ENCODE measurements at regions of chr10 and their contacts with region 1.

Region 1: DNA sequence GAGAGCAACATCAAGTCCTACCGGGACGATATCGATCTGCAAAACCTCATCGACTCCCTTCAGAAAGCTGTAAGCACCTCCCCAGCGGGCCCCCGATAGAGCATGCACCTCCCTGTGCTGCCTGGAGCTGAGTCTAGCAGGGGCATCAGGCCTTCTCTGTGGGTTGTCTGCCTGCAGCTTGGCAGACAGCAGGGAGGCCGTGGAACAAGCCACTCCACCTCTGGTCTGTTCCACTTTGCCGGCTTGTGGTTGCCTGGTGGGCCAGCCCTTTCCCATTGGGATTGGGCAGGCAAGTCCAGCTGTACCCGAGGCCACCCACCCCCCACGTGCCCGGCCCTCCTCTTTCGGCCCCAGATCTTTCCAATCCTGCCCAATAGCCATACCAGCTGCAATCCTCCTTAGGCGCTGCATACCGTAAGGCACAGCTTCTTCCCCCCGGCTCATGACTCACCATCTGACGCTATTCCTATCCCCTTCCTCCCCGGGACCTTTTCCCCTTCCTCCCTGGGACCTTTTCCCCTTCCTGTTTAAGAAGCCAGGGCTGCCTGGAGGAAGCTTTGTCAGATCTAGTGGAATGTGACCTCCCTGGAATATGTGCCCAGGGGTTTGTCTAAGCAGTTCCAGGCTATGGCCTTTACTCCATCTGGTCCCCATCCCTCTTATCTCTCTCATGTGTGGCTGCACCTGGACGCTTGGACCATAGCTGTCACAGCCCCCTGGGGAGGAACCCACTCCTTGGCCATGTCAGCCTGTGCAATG is 28.1 kb upstream of the SH2D4B start:
- DNase-seq: peak in 1 of 35 experiments; percentile 12
- ATAC-seq: no peak
- H3K4me3 ChIP-seq: no peak overlapping the region
- H3K4me3 Mint-ChIP-seq: no peak overlapping the region
- H3K27ac ChIP-seq: no peak overlapping the region
- H3K27ac Mint-ChIP-seq: peak overlapping the region; percentile 80 to 84
- H3K4me1 ChIP-seq: peaks cover 12 to 51% of the 10 kb centered on the region in 2 experiments
- H3K4me1 Mint-ChIP-seq: peaks cover 47 to 62% (median 49%) of the 10 kb centered on the region in 3 donors
- H3K27me3 ChIP-seq: no peaks in the 10 kb centered on the region
- H3K27me3 Mint-ChIP-seq: no peaks in the 10 kb centered on the region

Region 2: GRCh38 chr10:80408242-80409101 is 101.1 kb before region 1 on chr10 and contains the start of gene PRXL2A:
- CTCF ChIA-PET with region 1: interaction called, 10 to 12 read pairs
- POLR2A ChIA-PET with region 1: no interaction called
- DNase-seq: peak; percentile 35 to 86 (median 72)
- ATAC-seq: peak; percentile 96 to 98 (median 97)
- H3K4me3 ChIP-seq: peak within 1 kb of the TSS; percentile 76 to 92
- H3K4me3 Mint-ChIP-seq: peak within 1 kb of the TSS; percentile 89 to 91 (median 90)
- H3K27ac ChIP-seq: no peak within 1 kb of the TSS
- H3K27ac Mint-ChIP-seq: peak within 1 kb of the TSS; percentile 67 to 89
- H3K4me1 ChIP-seq: peaks cover 0 to 19% of the 10 kb centered on the region in 2 experiments
- H3K4me1 Mint-ChIP-seq: peaks cover 24 to 39% (median 35%) of the 10 kb centered on the region in 3 donors
- H3K27me3 ChIP-seq: peaks cover 0 to 26% of the 10 kb centered on the region in 2 experiments
- H3K27me3 Mint-ChIP-seq: peaks cover 0 to 7% of the 10 kb centered on the region in 2 donors
- total RNA-seq, gene PRXL2A: 2.9 to 6.3 (median 5.2) TPM

Region 3: DNA sequence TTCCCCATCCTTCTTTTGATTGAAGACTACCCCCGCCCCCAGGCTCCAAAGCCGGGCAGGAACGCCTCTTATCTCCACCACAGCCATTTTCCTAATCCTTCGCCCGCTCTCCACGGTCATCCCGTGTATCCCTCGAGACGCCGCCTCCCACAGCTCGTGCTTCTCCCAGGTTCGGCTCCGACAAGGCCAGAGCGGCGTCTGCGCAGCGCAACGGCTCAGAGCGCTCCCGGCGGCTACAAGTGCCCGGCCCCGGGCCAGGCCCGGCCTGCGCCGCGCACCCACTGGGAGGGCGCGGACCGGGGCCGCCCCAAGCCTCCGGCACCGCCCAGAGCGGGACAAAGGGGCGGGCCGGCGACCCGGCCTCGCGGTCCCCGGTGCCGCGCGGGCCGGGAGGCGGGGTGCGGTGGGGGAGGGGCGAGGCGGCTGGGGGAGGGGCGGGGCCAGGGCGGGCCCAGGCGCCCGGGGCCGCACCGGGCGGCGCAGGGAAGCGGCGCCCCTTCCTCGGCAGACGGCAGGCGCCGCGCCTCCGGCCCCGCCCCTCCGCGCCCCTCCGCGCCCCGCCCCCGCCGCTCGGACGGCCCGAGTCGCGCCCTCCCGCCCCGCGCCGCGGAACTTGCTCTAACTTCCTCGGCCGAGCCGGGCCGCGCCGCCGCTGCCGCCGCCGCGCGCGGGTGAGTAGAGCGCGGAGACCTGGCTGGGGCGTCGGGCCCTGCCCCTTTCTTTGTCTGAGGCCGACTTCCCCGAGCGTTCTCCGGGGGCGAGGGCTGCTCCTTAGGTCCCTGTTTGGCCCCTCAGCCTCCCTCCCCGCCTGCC is 55.7 kb before region 1 on chr10 and contains the start of gene TSPAN14:
- CTCF ChIA-PET with region 1: interaction called, 22 to 56 read pairs
- POLR2A ChIA-PET with region 1: interaction called, 3 read pairs
- DNase-seq: peak; percentile 26 to 87 (median 58)
- ATAC-seq: peak; percentile 71 to 79 (median 74)
- H3K4me3 ChIP-seq: peak within 1 kb of the TSS; percentile 76 to 82
- H3K4me3 Mint-ChIP-seq: peak within 1 kb of the TSS in 2 of 3 donors; percentile 98 to 99
- H3K27ac ChIP-seq: peak within 1 kb of the TSS; percentile 82
- H3K27ac Mint-ChIP-seq: peak within 1 kb of the TSS; percentile 95 to 99
- H3K4me1 ChIP-seq: peaks cover 10 to 44% of the 10 kb centered on the region in 2 experiments
- H3K4me1 Mint-ChIP-seq: peaks cover 43 to 45% (median 44%) of the 10 kb centered on the region in 3 donors
- H3K27me3 ChIP-seq: no peaks in the 10 kb centered on the region
- H3K27me3 Mint-ChIP-seq: no peaks in the 10 kb centered on the region
- total RNA-seq, gene TSPAN14: 130 to 204 (median 194) TPM

Region 4: GRCh38 chr10:80464557-80465450 is 44.8 kb before region 1 on chr10:
- CTCF ChIA-PET with region 1: interaction called, 22 to 56 read pairs
- POLR2A ChIA-PET with region 1: interaction called in 1 of 2 experiments, 3 read pairs
- DNase-seq: peak in 3 of 35 experiments; percentile 32 to 52 (median 32)
- ATAC-seq: peak in 3 of 4 experiments; percentile 15 to 17 (median 15)
- H3K4me3 ChIP-seq: peak overlapping the region; percentile 26 to 53
- H3K4me3 Mint-ChIP-seq: peak overlapping the region in 2 of 3 donors; percentile 78 to 79
- H3K27ac ChIP-seq: peak overlapping the region; percentile 82
- H3K27ac Mint-ChIP-seq: peak overlapping the region; percentile 95 to 99
- H3K4me1 ChIP-seq: peaks cover 68 to 100% of the 10 kb centered on the region in 2 experiments
- H3K4me1 Mint-ChIP-seq: peaks cover 98 to 99% (median 99%) of the 10 kb centered on the region in 3 donors
- H3K27me3 ChIP-seq: no peaks in the 10 kb centered on the region
- H3K27me3 Mint-ChIP-seq: no peaks in the 10 kb centered on the region

Region 5: DNA sequence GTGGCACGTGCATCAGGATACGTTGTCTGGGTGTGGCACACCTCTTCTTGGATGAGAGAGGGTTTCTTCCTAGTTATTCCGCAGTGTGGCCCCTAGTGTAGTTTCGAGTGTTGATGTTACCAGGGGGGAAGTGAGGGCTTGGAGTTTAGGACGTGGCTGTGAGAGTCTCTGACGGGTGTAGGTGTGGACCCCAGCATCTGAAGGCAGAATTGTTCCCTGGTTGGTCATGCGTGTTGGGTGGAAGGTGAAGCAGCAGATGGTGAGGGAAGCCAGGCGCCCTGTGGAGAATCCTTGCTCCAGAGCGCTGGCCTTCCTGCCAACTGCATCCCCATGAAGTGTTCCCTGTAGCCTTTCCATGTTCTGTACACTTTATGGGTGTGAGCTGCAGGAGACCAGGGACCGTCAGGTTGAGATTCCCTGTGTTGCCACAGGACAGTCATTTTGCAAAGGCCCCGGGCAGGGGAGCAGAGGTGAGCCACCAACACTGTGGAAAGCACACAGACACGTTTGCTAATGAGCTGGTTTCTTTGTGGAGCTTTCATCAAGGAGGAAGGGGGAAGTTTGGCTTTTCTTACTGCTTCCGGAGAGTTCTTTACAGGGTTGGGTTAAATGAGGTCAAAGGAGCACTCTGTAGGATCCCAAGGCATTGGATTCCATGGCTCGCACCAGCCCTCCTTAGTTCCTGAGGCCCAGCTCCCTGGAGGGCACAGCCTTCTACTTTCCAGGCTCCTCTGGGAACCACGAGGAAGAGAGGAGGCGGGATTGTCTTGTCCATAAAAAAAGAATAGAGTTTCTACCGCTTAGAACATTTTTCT is 23.4 kb before region 1 on chr10:
- CTCF ChIA-PET with region 1: interaction called, 8 to 12 read pairs
- POLR2A ChIA-PET with region 1: interaction called in 1 of 2 experiments, 3 read pairs
- DNase-seq: peak in 1 of 35 experiments; percentile 62
- ATAC-seq: peak in 3 of 4 experiments; percentile 13 to 41 (median 14)
- H3K4me3 ChIP-seq: peak overlapping the region; percentile 3 to 39
- H3K4me3 Mint-ChIP-seq: peak overlapping the region; percentile 57 to 68 (median 57)
- H3K27ac ChIP-seq: peak overlapping the region; percentile 74
- H3K27ac Mint-ChIP-seq: peak overlapping the region; percentile 86 to 94
- H3K4me1 ChIP-seq: peaks cover 79 to 94% of the 10 kb centered on the region in 2 experiments
- H3K4me1 Mint-ChIP-seq: peaks cover 93 to 98% (median 97%) of the 10 kb centered on the region in 3 donors
- H3K27me3 ChIP-seq: no peaks in the 10 kb centered on the region
- H3K27me3 Mint-ChIP-seq: no peaks in the 10 kb centered on the region